CD4-positive, alpha-beta T cell (primary cell): ENCODE measurements at regions of chr15 and their contacts with region 1.

Region 1: DNA sequence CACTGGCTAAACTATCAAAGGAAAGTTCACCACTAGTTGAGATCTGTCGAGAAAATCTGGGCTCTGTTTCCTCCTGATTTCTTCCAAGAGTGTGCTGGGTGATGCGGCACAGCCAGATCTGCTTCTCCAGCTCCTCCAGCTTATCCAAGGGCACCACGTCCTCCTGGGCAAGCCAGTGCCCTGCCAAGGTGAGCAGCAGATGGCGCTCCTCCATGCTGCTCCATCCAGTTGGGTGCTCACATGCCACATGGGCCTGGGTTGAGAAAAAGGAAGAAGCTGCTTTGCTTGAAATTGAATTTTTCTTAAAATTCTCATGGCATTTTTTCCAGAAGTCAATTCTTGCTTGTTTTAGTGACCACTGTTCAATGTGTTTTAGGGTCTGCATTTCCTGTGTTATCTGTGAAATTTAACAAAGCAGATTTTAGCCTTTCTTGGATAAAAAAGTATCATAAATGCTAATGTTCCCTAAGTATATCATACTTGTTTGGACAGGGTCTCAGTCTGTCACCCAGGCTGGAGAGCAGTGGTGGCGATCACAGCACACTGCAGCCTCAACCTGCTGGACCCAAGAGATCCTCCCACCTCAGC is 47.3 kb downstream of the EIF3J start:
- DNase-seq: peak; percentile 32 to 78 (median 54)
- ATAC-seq: peak; percentile 94
- H3K4me3 ChIP-seq: no peak overlapping the region
- H3K4me3 Mint-ChIP-seq: no peak overlapping the region
- H3K27ac ChIP-seq: no peak overlapping the region
- H3K27ac Mint-ChIP-seq: no peak overlapping the region
- H3K4me1 ChIP-seq: peaks cover 1% of the 10 kb centered on the region
- H3K4me1 Mint-ChIP-seq: peaks cover 21% of the 10 kb centered on the region
- H3K27me3 ChIP-seq: no peaks in the 10 kb centered on the region
- H3K27me3 Mint-ChIP-seq: no peaks in the 10 kb centered on the region
- CTCF ChIP-seq: peak; percentile 64

Region 2: DNA sequence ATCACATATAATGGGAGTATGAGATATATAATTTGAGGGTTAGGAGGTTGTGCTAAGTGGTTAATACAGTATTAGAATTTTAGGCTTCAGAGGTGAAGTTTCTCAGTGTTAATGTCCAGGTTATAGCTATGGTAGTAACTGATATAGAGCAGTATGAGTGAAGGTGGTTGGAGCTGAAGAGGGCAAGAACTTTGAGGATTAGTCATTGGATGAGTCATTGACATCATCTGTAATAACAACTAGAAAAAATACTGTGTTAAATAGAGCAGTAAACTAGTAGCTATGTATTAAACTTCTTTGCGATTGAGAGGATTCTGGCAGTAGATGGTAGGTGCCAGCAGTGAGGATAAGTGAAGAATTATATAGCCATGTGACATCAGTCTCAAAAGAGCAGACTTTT is 94.8 kb before region 1 on chr15:
- CTCF ChIA-PET with region 1: no interaction called
- POLR2A ChIA-PET with region 1: no interaction called
- intact Hi-C with region 1: no loop called
- DNase-seq: no peak
- ATAC-seq: no peak
- H3K4me3 ChIP-seq: no peak overlapping the region
- H3K4me3 Mint-ChIP-seq: no peak overlapping the region
- H3K27ac ChIP-seq: no peak overlapping the region
- H3K27ac Mint-ChIP-seq: peak overlapping the region; percentile 24
- H3K4me1 ChIP-seq: no peaks in the 10 kb centered on the region
- H3K4me1 Mint-ChIP-seq: peaks cover 15% of the 10 kb centered on the region
- H3K27me3 ChIP-seq: no peaks in the 10 kb centered on the region
- H3K27me3 Mint-ChIP-seq: no peaks in the 10 kb centered on the region
- CTCF ChIP-seq: no peak

Region 3: GRCh38 chr15:44545913-44546802 is 38.1 kb before region 1 on chr15:
- CTCF ChIA-PET with region 1: interaction called, 19 read pairs
- POLR2A ChIA-PET with region 1: no interaction called
- intact Hi-C with region 1: no loop called
- DNase-seq: peak in 4 of 14 experiments; percentile 15 to 59 (median 49)
- ATAC-seq: peak; percentile 58
- H3K4me3 ChIP-seq: no peak overlapping the region
- H3K4me3 Mint-ChIP-seq: peak overlapping the region; percentile 58
- H3K27ac ChIP-seq: no peak overlapping the region
- H3K27ac Mint-ChIP-seq: peak overlapping the region; percentile 79
- H3K4me1 ChIP-seq: peaks cover 21% of the 10 kb centered on the region
- H3K4me1 Mint-ChIP-seq: peaks cover 69% of the 10 kb centered on the region
- H3K27me3 ChIP-seq: no peaks in the 10 kb centered on the region
- H3K27me3 Mint-ChIP-seq: no peaks in the 10 kb centered on the region
- CTCF ChIP-seq: peak; percentile 55